Ovary (tissue), 10 donors: ENCODE measurements at regions of chr11 and their contacts with region 1.

Region 1: DNA sequence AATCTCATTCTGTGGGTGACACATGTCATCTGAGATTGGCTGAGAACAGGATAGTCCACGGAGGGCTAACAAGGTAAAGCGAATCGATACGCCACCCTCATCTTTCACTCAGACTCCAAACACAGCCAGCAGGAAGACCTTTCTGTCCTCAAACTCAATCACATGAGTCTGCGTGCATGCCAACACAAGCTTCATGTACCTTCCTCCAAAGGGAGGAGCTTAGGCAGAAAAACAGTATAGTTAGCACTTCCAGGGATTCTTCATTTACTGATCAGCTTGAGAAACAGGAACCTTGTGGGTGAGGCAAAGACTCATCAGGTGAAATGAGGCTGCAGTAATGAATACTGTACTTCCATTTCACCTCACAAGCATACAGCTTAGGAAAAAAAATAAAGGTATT is 767.1 kb upstream of the API5 start:
- DNase-seq: no peak
- H3K4me3 ChIP-seq: no peak overlapping the region
- H3K27ac ChIP-seq: no peak overlapping the region
- H3K4me1 ChIP-seq: no peaks in the 10 kb centered on the region
- H3K27me3 ChIP-seq: no peaks in the 10 kb centered on the region
- CTCF ChIP-seq: no peak
- EP300 ChIP-seq: no peak
- POLR2A ChIP-seq: no peak

Region 2: DNA sequence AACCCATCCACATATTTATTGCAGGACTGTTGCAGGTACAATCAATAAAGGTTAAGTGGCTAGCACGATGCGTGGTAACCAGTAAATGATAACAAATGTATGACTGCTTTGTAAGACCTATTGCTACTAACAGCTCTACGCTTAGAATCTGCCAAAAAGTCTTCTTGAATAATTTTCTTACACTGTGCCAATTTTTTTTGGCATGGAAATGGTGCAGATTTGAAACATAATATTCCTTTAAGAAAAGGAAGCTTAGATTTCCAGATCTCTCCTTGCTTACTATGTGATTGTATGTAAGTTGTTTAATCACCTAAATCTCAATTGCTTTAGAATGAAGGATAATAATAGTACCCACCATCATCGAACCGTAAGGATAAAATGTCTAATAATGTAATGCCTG is 1277.3 kb before region 1 on chr11:
- intact Hi-C with region 1: no loop called
- DNase-seq: no peak
- H3K4me3 ChIP-seq: no peak overlapping the region
- H3K27ac ChIP-seq: no peak overlapping the region
- H3K4me1 ChIP-seq: no peaks in the 10 kb centered on the region
- H3K27me3 ChIP-seq: no peaks in the 10 kb centered on the region
- CTCF ChIP-seq: no peak
- EP300 ChIP-seq: no peak
- POLR2A ChIP-seq: no peak

Region 3: GRCh38 chr11:42596576-42597145 is 51.9 kb after region 1 on chr11:
- intact Hi-C with region 1: no loop called
- DNase-seq: no peak
- H3K4me3 ChIP-seq: no peak overlapping the region
- H3K27ac ChIP-seq: no peak overlapping the region
- H3K4me1 ChIP-seq: no peaks in the 10 kb centered on the region
- H3K27me3 ChIP-seq: no peaks in the 10 kb centered on the region
- CTCF ChIP-seq: no peak
- EP300 ChIP-seq: no peak
- POLR2A ChIP-seq: no peak

Region 4: GRCh38 chr11:42837994-42838393 is 293.3 kb after region 1 on chr11:
- intact Hi-C with region 1: loop called in 1 of 4 experiments (anchors 5 kb)
- DNase-seq: no peak
- H3K4me3 ChIP-seq: no peak overlapping the region
- H3K27ac ChIP-seq: no peak overlapping the region
- H3K4me1 ChIP-seq: no peaks in the 10 kb centered on the region
- H3K27me3 ChIP-seq: no peaks in the 10 kb centered on the region
- CTCF ChIP-seq: no peak
- EP300 ChIP-seq: no peak
- POLR2A ChIP-seq: no peak